WTC11 (cell line): ENCODE measurements at regions of chr2 and their contacts with region 1.

Region 1: DNA sequence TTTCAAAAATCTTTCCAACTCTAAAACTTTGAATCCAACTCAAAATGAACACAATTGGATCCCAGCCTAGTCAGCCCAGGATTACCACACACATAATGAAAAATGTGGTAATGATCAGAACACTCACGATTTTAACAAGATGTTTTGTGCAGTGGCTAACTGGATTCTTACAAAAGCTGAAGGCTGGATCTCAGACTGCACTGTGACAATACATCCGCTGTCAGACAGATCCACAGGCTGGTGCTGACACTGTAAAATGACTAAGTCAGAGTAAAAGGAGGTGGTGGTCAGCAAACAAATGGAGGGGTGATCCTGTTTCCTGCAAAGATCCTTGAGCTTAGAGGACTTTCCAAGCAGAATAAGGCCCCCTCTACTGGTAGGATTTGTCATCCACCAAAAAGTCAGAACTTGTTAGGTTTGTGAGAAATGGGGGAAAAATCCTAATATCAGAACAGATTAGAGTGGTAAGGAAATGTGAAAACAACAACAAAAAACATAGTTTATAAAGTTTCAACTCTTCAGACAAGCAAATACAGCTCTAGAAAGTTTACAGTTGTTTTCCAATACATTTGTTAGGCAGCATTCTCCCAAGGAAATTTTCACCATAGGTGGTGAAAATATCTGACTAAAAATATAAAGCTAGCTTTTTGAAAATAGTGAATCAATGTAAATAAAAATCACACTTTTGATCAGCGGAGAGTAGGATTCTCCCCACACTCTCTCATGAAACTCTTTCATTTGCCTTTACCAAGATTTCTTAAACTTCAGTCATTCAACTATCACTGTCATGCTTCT is 211.9 kb downstream of the AGPS start:
- DNase-seq: no peak
- ATAC-seq: peak; percentile 92
- H3K4me3 Mint-ChIP-seq: no peak overlapping the region
- H3K27ac Mint-ChIP-seq: no peak overlapping the region
- H3K4me1 Mint-ChIP-seq: peaks cover 6% of the 10 kb centered on the region
- H3K27me3 Mint-ChIP-seq: no peaks in the 10 kb centered on the region; the same call in 1 of the 2 replicates
- CTCF ChIP-seq: peak; percentile 42; the same call in 1 of the 2 replicates

Region 2: DNA sequence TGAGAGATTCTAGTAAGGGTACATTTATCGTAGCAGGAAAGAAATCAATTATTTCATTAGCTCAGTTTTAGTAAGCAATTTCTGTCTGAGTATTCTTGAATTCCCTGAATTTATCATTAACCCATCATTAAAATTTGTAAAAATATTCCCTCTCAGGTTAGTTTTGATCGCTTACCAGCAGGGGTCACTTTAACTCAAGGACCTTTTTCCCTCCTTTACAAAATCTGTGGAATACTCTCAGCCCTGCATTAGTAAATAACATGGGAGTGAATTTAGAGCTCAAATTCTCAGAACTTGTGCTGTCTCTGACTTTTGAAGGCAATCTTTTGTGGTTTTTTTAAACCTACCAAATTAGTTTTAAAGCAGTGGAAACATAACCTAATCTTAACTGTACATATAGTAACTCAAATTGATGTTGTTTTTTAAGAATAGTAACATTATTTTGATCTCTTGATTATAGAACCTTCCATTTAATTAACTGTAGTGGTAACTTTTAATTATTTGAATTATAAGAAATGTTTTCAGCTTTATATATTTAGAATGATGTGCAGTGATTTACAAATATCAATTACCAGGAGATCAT is 114.7 kb before region 1 on chr2:
- CTCF ChIA-PET with region 1: interaction called, 13 read pairs
- POLR2A ChIA-PET with region 1: no interaction called
- DNase-seq: no peak
- ATAC-seq: no peak; the same call in 1 of the 2 replicates
- H3K4me3 Mint-ChIP-seq: no peak overlapping the region
- H3K27ac Mint-ChIP-seq: no peak overlapping the region
- H3K4me1 Mint-ChIP-seq: no peaks in the 10 kb centered on the region
- H3K27me3 Mint-ChIP-seq: no peaks in the 10 kb centered on the region
- CTCF ChIP-seq: peak; percentile 33; the same call in 1 of the 2 replicates

Region 3: DNA sequence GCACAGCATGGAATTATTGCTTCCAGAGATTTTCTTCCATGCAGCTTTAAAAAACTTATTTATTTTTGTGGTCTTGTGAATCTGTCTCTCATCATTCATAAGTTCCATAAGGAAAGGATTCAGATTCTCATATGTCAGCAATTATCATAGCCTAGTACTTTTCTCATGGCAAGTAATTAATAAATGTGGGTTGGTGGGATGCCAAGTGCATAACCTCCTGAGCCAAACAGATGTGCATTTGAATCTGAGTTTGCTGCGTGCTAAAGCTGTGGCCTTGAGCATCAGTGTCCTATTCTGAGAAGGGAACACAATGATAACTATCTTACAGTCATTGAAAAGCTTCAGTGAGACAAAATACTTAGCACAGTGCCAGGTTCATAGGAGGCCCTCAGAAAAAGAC is 136.2 kb after region 1 on chr2:
- CTCF ChIA-PET with region 1: no interaction called
- POLR2A ChIA-PET with region 1: no interaction called
- DNase-seq: no peak
- ATAC-seq: no peak
- H3K4me3 Mint-ChIP-seq: no peak overlapping the region
- H3K27ac Mint-ChIP-seq: no peak overlapping the region
- H3K4me1 Mint-ChIP-seq: no peaks in the 10 kb centered on the region
- H3K27me3 Mint-ChIP-seq: peaks cover 98% of the 10 kb centered on the region
- CTCF ChIP-seq: no peak